Panc1 (cell line): ENCODE measurements at regions of chr5 and their contacts with region 1.

Region 1: DNA sequence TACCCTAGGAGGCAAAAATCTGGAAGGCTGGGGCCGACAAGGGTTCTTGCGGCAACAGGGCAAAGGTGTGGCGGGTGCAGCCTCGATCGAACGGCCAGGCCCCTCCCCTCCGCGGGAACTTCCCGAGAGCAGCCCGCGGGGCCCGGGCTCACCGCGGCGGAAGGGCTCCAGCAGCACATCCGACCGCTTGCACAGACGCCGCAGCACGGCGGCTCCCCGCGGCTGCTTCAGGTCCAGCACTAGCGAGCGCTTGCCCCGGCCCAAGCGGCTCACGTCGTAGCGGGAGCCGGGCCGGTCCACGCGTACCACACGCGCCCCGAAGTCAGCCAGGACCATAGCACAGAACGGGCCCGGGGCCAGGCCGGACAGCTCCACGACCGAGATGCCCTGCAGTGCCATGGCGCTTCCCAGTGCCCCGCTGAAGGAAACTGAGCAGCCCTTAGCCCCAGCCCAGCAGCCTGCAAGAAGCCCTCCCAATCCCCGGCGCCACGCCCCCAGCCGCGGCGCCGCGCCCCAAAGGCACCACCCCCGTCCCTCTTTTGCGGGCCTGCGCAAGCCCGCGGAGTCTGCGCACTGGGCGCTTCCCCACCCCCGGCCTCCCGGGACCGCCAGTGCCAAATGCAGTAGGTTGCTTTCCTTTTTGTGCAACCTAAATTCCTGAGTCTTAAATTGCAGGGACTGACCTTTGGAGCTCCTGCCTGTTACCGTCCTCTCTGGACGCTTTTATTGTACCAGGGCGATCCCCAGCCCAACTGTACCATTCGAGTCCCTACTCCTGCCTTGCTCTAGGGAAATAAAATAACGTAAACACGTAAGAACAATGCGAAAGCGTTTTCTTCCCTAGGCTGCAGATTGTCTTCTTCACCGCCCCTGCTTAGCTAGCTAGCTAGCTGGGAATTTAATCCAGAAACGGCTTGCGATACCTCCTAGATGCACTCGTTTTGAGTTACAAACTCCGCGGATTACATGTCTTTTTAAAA is at the start of gene AMACR:
- DNase-seq: peak; percentile 61
- ATAC-seq: peak; percentile 96
- H3K4me3 ChIP-seq: peak within 1 kb of the TSS; percentile 79 to 90
- H3K27ac ChIP-seq: peak within 1 kb of the TSS; percentile 99
- H3K4me1 ChIP-seq: peaks cover 8% of the 10 kb centered on the region
- H3K27me3 ChIP-seq: no peaks in the 10 kb centered on the region
- CTCF ChIP-seq: no peak
- total RNA-seq, gene AMACR: 20.6 TPM

Region 2: DNA sequence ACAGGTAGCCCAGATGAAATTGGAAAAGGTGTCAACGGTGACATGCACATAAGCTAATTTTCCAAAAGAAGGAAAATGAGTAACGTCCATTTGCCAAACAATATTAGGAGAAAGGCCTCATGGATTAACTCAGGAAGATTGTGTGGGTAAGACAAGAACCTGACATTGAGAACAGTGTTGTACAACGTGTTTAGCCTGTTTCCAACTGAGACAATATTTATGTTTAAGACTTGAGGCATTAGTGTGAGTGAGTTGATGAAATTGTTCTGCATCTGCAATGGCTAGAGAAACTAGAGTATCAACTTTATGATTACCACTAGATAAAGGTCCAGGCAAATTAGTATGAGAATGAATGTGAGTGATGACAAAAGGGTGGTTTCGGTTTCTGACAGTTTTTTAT is 456.9 kb after region 1 on chr5:
- CTCF ChIA-PET with region 1: no interaction called
- POLR2A ChIA-PET with region 1: no interaction called
- in situ Hi-C with region 1: no loop called
- intact Hi-C with region 1: loop called (anchors 5 kb)
- DNase-seq: no peak
- ATAC-seq: no peak
- H3K4me3 ChIP-seq: no peak overlapping the region
- H3K27ac ChIP-seq: peak overlapping the region; percentile 56; the same call in 1 of the 2 replicates
- H3K4me1 ChIP-seq: peaks cover 3% of the 10 kb centered on the region; the same call in 1 of the 2 replicates
- H3K27me3 ChIP-seq: no peaks in the 10 kb centered on the region
- CTCF ChIP-seq: no peak